ENCODE measurements at regions of chr6 and their contacts with region 1.

Region 1: GRCh38 chr6:27078734-27079357 is 168.7 kb upstream of the PRSS16 start:
- DNase-seq: peak; percentile 35 to 65 (median 51)
- ATAC-seq: peak; percentile 79
- H3K4me3 ChIP-seq: no peak overlapping the region
- H3K27ac ChIP-seq: no peak overlapping the region
- H3K4me1 ChIP-seq: peaks cover 5% of the 10 kb centered on the region
- H3K27me3 ChIP-seq: no peaks in the 10 kb centered on the region
- CTCF ChIP-seq: peak; percentile 41 to 84 (median 78)
- POLR2A ChIP-seq: no peak

Region 2: GRCh38 chr6:26607434-26608230 is 471.2 kb before region 1 on chr6:
- intact Hi-C with region 1: loop called (anchors 10 kb)
- DNase-seq: peak; percentile 46 to 65 (median 52)
- ATAC-seq: peak; percentile 75
- H3K4me3 ChIP-seq: no peak overlapping the region
- H3K27ac ChIP-seq: no peak overlapping the region
- H3K4me1 ChIP-seq: no peaks in the 10 kb centered on the region
- H3K27me3 ChIP-seq: peaks cover 0 to 4% of the 10 kb centered on the region in 2 donors
- CTCF ChIP-seq: peak; percentile 39 to 72 (median 58)
- POLR2A ChIP-seq: no peak

Measured in body of pancreas (tissue), 4 donors.